Activated CD8-positive, alpha-beta T cell treated with anti-CD3 and anti-CD28 coated beads for 36 hours (primary cell): ENCODE measurements at regions of chr17 and their contacts with region 1.

Region 1: DNA sequence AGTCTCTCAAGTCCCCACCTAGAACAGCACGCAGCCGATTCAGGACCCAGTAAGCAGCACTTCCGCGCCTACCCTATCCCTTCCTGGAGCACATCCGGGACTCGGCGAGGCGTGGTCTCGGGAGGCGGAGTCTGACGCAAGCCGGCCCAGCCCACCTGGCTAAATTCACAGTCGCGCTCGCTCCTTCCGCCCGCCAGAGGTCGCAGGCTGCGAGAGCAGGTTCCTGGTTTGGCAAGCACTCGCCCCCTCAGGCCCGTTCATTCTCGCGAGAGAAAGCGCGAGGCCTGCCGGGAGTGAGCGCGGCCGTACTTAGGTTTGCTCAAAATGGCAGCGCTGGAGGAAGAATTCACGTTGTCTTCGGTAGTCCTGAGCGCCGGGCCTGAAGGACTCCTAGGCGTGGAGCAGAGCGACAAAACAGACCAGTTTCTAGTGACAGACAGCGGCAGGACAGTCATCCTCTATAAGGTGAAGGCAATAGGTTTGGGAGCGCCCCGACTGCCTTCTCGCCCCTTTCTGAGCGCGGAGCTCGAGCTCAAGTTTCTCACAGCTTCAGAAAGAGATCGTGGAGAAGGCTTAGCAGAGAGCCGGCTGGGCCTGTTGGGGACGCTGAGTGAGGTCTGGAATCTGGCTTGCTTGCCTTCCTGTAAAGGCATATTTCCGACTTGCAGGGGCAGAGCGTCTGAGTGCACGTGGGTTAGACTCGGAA is at the start of gene NOL11:
- DNase-seq: peak; percentile 100
- ATAC-seq: peak; percentile 97
- H3K4me3 Mint-ChIP-seq: peak within 1 kb of the TSS; percentile 87
- H3K27ac Mint-ChIP-seq: peak within 1 kb of the TSS; percentile 99
- H3K4me1 Mint-ChIP-seq: peaks cover 19% of the 10 kb centered on the region
- H3K27me3 Mint-ChIP-seq: peaks cover 1% of the 10 kb centered on the region
- CTCF ChIP-seq: peak; percentile 87
- total RNA-seq, gene NOL11: 74.3 to 76.0 TPM

Region 2: DNA sequence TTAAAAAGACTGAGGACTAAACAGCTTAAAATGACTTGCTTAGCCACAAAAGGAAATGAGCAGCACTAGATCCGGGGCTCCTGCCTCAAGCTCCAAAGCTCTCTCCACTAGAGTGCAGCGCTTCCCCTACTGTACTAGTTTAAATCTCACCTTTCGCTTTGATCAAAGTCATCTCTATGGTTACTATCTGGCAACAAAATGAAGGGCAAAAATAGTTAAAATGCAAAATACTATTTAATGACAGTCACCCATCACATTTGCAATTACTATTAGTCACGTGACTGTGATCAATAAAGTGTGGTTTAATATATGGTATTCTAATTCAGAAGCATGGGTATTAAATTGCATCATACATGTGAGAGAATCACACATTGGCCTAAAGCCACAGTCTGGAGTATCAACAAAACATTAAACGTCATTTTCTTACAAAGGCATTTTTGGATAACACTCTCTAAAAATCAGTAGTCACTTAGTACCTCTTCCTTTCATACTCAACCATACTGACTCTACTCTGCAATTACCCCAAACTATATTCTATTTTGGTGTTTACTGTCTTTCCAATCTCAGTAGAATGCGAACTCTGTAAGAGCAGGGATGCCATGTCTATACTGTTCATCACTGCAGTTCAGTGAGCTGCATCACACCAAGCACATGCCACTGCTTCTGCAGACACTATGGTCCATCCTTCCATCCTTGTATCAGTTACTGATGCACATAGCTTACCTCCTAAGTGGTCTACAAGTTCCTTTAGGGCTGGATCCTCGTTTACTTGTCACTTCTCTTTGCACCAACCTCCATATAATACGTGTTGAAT is 357.6 kb before region 1 on chr17:
- CTCF ChIA-PET with region 1: no interaction called
- POLR2A ChIA-PET with region 1: interaction called, 12 read pairs
- intact Hi-C with region 1: no loop called
- DNase-seq: peak; percentile 77
- ATAC-seq: peak; percentile 81
- H3K4me3 Mint-ChIP-seq: peak overlapping the region; percentile 48
- H3K27ac Mint-ChIP-seq: peak overlapping the region; percentile 72
- H3K4me1 Mint-ChIP-seq: peaks cover 64% of the 10 kb centered on the region
- H3K27me3 Mint-ChIP-seq: no peaks in the 10 kb centered on the region
- CTCF ChIP-seq: no peak

Region 3: GRCh38 chr17:67366193-67367157 is 351.3 kb before region 1 on chr17 and contains the start of gene PSMD12:
- CTCF ChIA-PET with region 1: interaction called, 4 read pairs
- POLR2A ChIA-PET with region 1: interaction called, 12 read pairs
- intact Hi-C with region 1: no loop called
- DNase-seq: peak; percentile 94
- ATAC-seq: peak; percentile 94
- H3K4me3 Mint-ChIP-seq: peak within 1 kb of the TSS; percentile 97
- H3K27ac Mint-ChIP-seq: peak within 1 kb of the TSS; percentile 96
- H3K4me1 Mint-ChIP-seq: peaks cover 43% of the 10 kb centered on the region
- H3K27me3 Mint-ChIP-seq: no peaks in the 10 kb centered on the region
- CTCF ChIP-seq: no peak
- total RNA-seq, gene PSMD12: 80.9 to 89.1 TPM

Region 4: DNA sequence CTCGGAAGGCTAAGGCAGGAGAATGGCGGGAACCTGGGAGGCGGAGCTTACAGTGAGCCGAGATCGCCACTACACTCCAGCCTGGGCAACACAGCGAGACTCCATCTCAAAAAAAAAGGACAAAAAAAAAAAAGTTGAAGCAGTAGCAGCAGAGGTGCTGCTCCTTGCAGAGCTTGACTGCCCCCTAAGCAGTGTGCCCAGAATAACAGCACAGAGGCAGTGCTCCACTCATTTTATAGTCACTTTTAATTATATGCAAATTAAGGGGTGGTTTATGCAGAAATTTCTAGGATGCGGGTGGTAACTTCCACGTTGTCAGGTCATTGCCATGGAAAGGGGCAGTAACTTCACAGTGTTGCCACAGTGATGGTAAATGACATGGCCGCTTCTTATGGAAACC is 54.3 kb before region 1 on chr17:
- CTCF ChIA-PET with region 1: no interaction called
- POLR2A ChIA-PET with region 1: no interaction called
- intact Hi-C with region 1: no loop called
- DNase-seq: no peak
- ATAC-seq: no peak
- H3K4me3 Mint-ChIP-seq: no peak overlapping the region
- H3K27ac Mint-ChIP-seq: no peak overlapping the region
- H3K4me1 Mint-ChIP-seq: peaks cover 14% of the 10 kb centered on the region
- H3K27me3 Mint-ChIP-seq: no peaks in the 10 kb centered on the region
- CTCF ChIP-seq: no peak

Region 5: GRCh38 chr17:67707442-67707841 is 10.3 kb before region 1 on chr17:
- CTCF ChIA-PET with region 1: no interaction called
- POLR2A ChIA-PET with region 1: interaction called, 11 read pairs
- intact Hi-C with region 1: no loop called
- DNase-seq: no peak
- ATAC-seq: no peak
- H3K4me3 Mint-ChIP-seq: no peak overlapping the region
- H3K27ac Mint-ChIP-seq: no peak overlapping the region
- H3K4me1 Mint-ChIP-seq: no peaks in the 10 kb centered on the region
- H3K27me3 Mint-ChIP-seq: no peaks in the 10 kb centered on the region
- CTCF ChIP-seq: no peak

Region 6: GRCh38 chr17:67733371-67733940 is 15.7 kb after region 1 on chr17:
- CTCF ChIA-PET with region 1: interaction called, 5 read pairs
- POLR2A ChIA-PET with region 1: interaction called, 12 read pairs
- intact Hi-C with region 1: no loop called
- DNase-seq: no peak
- ATAC-seq: no peak
- H3K4me3 Mint-ChIP-seq: no peak overlapping the region
- H3K27ac Mint-ChIP-seq: peak overlapping the region; percentile 16
- H3K4me1 Mint-ChIP-seq: peaks cover 21% of the 10 kb centered on the region
- H3K27me3 Mint-ChIP-seq: no peaks in the 10 kb centered on the region
- CTCF ChIP-seq: no peak

Region 7: GRCh38 chr17:67742025-67742424 is 24.2 kb after region 1 on chr17:
- CTCF ChIA-PET with region 1: interaction called, 8 read pairs
- POLR2A ChIA-PET with region 1: interaction called, 14 read pairs
- intact Hi-C with region 1: no loop called
- DNase-seq: no peak
- ATAC-seq: no peak
- H3K4me3 Mint-ChIP-seq: no peak overlapping the region
- H3K27ac Mint-ChIP-seq: no peak overlapping the region
- H3K4me1 Mint-ChIP-seq: no peaks in the 10 kb centered on the region
- H3K27me3 Mint-ChIP-seq: no peaks in the 10 kb centered on the region
- CTCF ChIP-seq: no peak

Region 8: DNA sequence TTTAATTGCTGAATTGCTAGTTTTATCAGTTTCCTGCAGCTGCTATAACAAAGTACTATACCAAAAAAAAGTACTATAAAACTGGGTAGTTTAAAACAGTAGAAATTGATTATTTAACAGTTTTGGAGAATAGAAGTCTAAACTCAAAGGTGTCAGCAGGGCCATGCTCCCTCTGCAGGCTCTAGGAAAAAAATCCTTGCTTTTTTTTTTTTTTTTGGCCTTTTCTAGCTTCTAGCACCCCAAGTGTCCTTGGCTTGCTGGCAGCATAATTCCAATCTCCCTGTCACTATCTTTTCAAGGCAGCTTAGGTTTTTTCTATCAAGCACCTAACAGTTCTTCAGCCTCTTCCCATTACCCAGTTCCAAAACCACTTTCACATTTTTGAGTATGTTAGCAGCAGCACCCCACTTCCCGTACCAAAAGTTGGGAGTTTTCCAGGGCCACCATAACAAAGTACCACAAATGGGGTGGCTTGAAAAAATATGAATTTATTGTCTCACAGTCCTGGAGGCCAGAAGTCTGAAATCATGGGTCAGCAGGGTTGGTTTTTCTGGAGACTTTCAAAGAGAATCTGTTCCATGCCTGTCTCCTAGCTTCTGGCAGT is 144.9 kb after region 1 on chr17:
- CTCF ChIA-PET with region 1: no interaction called
- POLR2A ChIA-PET with region 1: no interaction called
- intact Hi-C with region 1: no loop called
- DNase-seq: no peak
- ATAC-seq: no peak
- H3K4me3 Mint-ChIP-seq: no peak overlapping the region
- H3K27ac Mint-ChIP-seq: peak overlapping the region; percentile 89
- H3K4me1 Mint-ChIP-seq: peaks cover 69% of the 10 kb centered on the region
- H3K27me3 Mint-ChIP-seq: no peaks in the 10 kb centered on the region
- CTCF ChIP-seq: no peak

Region 9: DNA sequence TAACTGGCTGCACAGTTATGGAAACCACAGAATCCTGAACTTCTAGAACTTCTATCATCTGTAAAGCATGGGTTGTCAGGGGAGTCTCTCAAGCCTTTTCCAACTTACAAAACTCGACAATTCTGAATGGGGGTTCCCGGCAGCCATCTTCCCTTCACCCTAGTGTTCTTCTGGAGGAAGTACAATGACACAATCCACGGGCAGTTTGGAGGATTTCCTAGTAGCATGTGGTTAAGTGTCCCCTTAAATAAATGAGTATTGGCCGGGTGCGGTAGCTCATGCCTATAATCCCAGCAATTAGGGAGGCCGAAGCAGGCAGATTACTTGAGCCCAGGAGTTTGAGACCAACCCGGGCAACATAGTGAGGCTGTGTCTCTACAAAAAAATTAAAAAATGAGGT is 571.0 kb after region 1 on chr17:
- CTCF ChIA-PET with region 1: no interaction called
- POLR2A ChIA-PET with region 1: no interaction called
- intact Hi-C with region 1: no loop called
- DNase-seq: peak; percentile 50
- ATAC-seq: no peak
- H3K4me3 Mint-ChIP-seq: peak overlapping the region; percentile 94
- H3K27ac Mint-ChIP-seq: peak overlapping the region; percentile 18
- H3K4me1 Mint-ChIP-seq: peaks cover 43% of the 10 kb centered on the region
- H3K27me3 Mint-ChIP-seq: no peaks in the 10 kb centered on the region
- CTCF ChIP-seq: no peak